AG04450 (cell line): ENCODE measurements at regions of chr12 and their contacts with region 1.

Region 1: GRCh38 chr12:108803428-108804105 is 53.8 kb downstream of the SSH1 start:
- DNase-seq: peak; percentile 85
- H3K4me3 ChIP-seq: no peak overlapping the region
- H3K27ac ChIP-seq: peak overlapping the region; percentile 99
- H3K27me3 ChIP-seq: no peaks in the 10 kb centered on the region
- CTCF ChIP-seq: peak; percentile 96

Region 2: DNA sequence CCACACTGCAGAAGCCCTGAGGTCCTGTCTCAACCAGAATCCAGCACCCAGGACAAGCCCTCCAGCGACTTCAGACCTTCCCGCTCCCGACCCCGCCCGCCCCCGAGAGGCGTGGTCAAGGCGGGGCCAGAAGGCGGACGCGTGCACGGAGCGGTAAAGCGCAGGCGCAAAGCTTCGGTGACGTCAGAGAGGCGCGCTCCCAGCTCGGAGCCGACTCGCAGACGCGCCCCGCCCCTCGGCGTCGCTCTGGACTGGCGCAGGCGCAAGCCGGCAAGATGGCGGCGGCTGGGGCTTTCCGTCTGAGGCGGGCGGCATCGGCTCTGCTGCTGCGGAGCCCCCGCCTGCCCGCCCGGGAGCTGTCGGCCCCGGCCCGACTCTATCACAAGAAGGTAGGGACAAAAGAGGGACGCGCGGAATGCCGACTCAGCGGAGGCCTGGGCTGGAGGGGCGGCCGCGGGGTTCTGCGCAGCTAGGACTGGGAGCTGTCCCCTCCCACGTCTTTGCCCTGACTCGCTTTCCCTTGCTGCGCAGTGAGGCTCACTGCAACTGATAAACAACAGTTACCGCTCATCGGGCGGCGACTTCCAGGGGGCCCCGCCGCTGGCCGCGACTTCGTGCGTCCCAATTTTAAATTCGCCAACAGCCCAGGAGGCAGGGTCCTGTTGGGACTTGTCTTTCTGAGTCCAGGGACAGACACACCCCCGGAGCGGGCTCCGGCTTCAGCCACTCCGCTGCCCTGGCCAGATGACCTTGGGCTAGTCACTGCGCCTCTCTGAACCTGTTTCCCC is 241.0 kb before region 1 on chr12 and contains the start of gene ISCU:
- CTCF ChIA-PET with region 1: interaction called, 25 read pairs
- POLR2A ChIA-PET with region 1: no interaction called
- DNase-seq: peak; percentile 94
- H3K4me3 ChIP-seq: peak within 1 kb of the TSS; percentile 100
- H3K27ac ChIP-seq: peak within 1 kb of the TSS; percentile 87
- H3K27me3 ChIP-seq: no peaks in the 10 kb centered on the region
- CTCF ChIP-seq: no peak
- polyA plus RNA-seq, gene ISCU: 164 and 184 TPM in 2 replicates

Region 3: GRCh38 chr12:108640802-108641445 is 162.6 kb before region 1 on chr12:
- CTCF ChIA-PET with region 1: interaction called, 18 read pairs
- POLR2A ChIA-PET with region 1: interaction called, 7 read pairs
- DNase-seq: no peak
- H3K4me3 ChIP-seq: no peak overlapping the region
- H3K27ac ChIP-seq: peak overlapping the region; percentile 11
- H3K27me3 ChIP-seq: no peaks in the 10 kb centered on the region
- CTCF ChIP-seq: no peak

Region 4: DNA sequence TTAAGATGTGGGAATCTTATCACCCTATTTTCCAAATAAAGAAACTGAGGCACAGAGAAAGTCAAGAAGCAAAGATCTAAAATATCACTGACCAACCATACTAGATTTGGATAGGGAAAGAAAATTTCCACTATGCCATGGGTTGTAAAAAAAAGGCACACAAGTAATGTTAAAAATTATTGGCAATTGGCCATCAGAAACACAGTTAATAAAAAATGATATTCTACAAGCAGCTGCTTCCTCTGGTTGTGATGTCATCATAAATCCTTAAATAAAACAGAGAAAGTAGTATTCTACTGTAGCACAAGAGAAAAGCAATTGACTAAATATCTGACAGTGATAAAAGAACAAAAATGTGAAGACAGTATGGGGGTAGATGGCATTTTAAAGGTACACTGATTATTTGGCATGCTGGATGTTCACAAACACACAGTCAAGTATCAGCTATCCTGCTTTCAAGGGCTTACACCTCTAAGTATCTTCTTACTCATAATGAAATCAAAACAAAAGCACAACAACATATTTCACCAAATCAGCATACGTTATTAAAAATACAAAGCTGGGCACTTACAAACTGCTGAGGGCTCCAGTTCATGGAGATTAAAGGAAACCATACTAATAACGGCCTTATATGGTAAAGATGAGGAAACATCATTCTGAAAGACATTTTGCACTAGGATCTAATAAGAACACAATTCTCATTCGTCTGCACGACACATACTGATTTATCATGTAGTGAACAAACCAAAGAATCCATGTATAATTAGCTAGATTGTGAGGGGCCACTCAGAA is 117.9 kb before region 1 on chr12:
- CTCF ChIA-PET with region 1: interaction called, 16 read pairs
- POLR2A ChIA-PET with region 1: interaction called, 6 read pairs
- DNase-seq: no peak
- H3K4me3 ChIP-seq: no peak overlapping the region
- H3K27ac ChIP-seq: no peak overlapping the region
- H3K27me3 ChIP-seq: no peaks in the 10 kb centered on the region
- CTCF ChIP-seq: no peak

Region 5: DNA sequence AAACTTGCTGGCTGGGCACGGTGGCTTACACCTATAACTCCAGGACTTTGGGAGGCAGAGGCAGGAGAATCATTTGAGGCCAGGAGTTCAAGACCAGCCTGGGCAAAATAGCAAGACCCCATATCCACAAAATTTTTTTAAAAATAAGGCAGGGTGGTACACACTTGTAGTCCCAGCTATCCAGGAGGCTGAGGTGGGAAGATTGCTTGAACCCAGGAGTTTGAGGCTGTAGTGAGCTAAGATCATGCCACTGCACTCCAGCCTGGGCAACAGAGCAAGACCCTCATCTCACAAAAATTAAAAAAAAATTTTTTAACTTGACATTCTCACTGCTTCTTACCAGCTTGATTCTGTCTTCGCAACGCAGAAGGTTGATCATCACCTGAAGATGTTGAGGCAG is 14.3 kb after region 1 on chr12:
- CTCF ChIA-PET with region 1: interaction called, 11 read pairs
- POLR2A ChIA-PET with region 1: interaction called, 3 read pairs
- DNase-seq: no peak
- H3K4me3 ChIP-seq: no peak overlapping the region
- H3K27ac ChIP-seq: no peak overlapping the region
- H3K27me3 ChIP-seq: no peaks in the 10 kb centered on the region
- CTCF ChIP-seq: no peak

Region 6: DNA sequence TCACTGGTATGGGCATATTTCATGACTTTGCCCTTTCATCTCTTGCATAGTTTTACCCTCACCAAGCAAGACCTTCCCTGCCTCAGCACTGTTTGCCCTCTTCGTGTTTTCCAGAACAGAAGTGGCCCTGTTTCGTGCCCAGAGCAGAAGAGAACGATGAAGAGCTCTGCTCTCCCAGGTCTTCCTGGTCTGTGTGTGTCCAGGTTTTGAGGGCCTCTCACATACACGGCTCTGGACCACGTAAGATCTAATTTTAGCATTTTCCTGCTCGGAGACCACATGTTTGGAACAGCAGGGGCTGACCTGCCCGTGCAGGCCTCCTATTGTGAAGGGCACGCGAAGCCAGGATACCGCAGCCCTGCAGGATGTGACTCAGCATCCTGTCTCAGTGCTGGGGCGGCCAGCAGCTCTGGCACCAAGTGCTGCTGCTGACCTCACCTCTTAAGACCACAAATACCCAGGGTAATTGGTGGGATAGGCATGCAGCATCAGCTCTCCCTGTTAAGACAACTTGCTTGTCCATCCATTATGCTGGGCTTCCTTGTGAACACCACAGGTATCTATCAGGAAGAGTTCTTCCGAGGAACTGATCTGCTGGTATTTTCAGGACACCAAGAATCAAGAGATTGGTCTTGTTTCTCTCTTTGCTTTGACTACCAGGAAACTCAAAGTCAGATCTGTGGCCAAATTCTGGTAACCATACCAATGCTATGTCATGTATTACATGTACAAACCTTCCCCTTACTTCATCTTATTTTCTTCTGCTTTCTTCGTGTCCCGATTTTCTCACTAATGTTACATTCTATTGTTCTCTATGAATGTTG is 34.8 kb after region 1 on chr12:
- CTCF ChIA-PET with region 1: interaction called, 5 read pairs
- POLR2A ChIA-PET with region 1: interaction called, 18 read pairs
- DNase-seq: peak; percentile 100
- H3K4me3 ChIP-seq: peak overlapping the region; percentile 20; the same call in 1 of the 2 replicates
- H3K27ac ChIP-seq: peak overlapping the region; percentile 98
- H3K27me3 ChIP-seq: no peaks in the 10 kb centered on the region
- CTCF ChIP-seq: no peak

Region 7: GRCh38 chr12:109093022-109093918 is 289.7 kb after region 1 on chr12 and contains the start of gene ALKBH2:
- CTCF ChIA-PET with region 1: interaction called, 10 read pairs
- POLR2A ChIA-PET with region 1: no interaction called
- DNase-seq: peak; percentile 72
- H3K4me3 ChIP-seq: peak within 1 kb of the TSS; percentile 75
- H3K27ac ChIP-seq: peak within 1 kb of the TSS; percentile 65
- H3K27me3 ChIP-seq: no peaks in the 10 kb centered on the region
- CTCF ChIP-seq: peak; percentile 99
- polyA plus RNA-seq, gene ALKBH2: 13.2 and 14.6 TPM in 2 replicates